Activated T-helper 2 cell treated with anti-CD3 and anti-CD28 coated beads, Interferon-gamma antibody, Interleukin-2, Interleukin-4, amounts not matched to agents 10 μg/mL and 5 μg/mL and 100 μg/mL, durations not matched to agents 14 hours and 24 hours and 36 hours (primary cell): ENCODE measurements at regions of chr20 and their contacts with region 1.

Region 1: GRCh38 chr20:36439040-36439730 is 102.1 kb upstream of the MYL9 start:
- DNase-seq: peak; percentile 46
- H3K4me3 Mint-ChIP-seq: no peak overlapping the region
- H3K27ac Mint-ChIP-seq: no peak overlapping the region
- H3K4me1 Mint-ChIP-seq: no peaks in the 10 kb centered on the region
- H3K27me3 Mint-ChIP-seq: peaks cover 4% of the 10 kb centered on the region

Region 2: DNA sequence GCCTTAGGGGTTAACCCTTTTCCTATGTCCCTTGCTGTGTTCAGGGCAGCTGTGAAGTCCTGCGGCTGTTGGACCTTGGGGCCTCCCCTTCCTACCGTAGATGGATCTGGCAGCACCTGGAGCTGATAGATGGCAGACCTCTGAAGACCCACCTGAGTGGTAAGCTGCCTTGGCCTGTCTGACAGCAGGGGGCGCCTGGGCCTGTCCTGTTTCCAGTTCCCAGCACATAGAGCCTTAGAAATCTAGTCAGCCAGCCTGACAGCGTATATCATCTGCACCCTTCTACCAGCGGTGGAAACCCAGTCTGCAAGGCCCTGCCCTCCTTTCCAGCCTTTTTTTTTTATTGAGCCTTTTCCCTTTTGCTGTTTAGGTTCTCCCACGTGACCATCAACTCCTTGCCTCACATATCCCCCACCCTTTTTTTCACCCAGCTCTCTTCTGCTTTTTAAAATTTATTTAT is 444.2 kb before region 1 on chr20:
- intact Hi-C with region 1: loop called (anchors 5 kb)
- DNase-seq: peak; percentile 51
- H3K4me3 Mint-ChIP-seq: no peak overlapping the region
- H3K27ac Mint-ChIP-seq: no peak overlapping the region
- H3K4me1 Mint-ChIP-seq: peaks cover 3% of the 10 kb centered on the region
- H3K27me3 Mint-ChIP-seq: peaks cover 10% of the 10 kb centered on the region

Region 3: GRCh38 chr20:36155991-36156390 is 283.2 kb before region 1 on chr20:
- intact Hi-C with region 1: loop called (anchors 2 kb)
- DNase-seq: no peak
- H3K4me3 Mint-ChIP-seq: no peak overlapping the region
- H3K27ac Mint-ChIP-seq: no peak overlapping the region
- H3K4me1 Mint-ChIP-seq: peaks cover 2% of the 10 kb centered on the region
- H3K27me3 Mint-ChIP-seq: peaks cover 38% of the 10 kb centered on the region

Region 4: GRCh38 chr20:36199345-36200257 is 239.6 kb before region 1 on chr20:
- intact Hi-C with region 1: loop called (anchors 2 kb)
- DNase-seq: peak; percentile 50
- H3K4me3 Mint-ChIP-seq: no peak overlapping the region
- H3K27ac Mint-ChIP-seq: no peak overlapping the region
- H3K4me1 Mint-ChIP-seq: peaks cover 2% of the 10 kb centered on the region
- H3K27me3 Mint-ChIP-seq: peaks cover 12% of the 10 kb centered on the region

Region 5: GRCh38 chr20:36268440-36269342 is 170.5 kb before region 1 on chr20:
- intact Hi-C with region 1: loop called (anchors 10 kb)
- DNase-seq: no peak
- H3K4me3 Mint-ChIP-seq: no peak overlapping the region
- H3K27ac Mint-ChIP-seq: no peak overlapping the region
- H3K4me1 Mint-ChIP-seq: no peaks in the 10 kb centered on the region
- H3K27me3 Mint-ChIP-seq: peaks cover 2% of the 10 kb centered on the region